ENCODE measurements at regions of chr15 and their contacts with region 1.

Region 1: DNA sequence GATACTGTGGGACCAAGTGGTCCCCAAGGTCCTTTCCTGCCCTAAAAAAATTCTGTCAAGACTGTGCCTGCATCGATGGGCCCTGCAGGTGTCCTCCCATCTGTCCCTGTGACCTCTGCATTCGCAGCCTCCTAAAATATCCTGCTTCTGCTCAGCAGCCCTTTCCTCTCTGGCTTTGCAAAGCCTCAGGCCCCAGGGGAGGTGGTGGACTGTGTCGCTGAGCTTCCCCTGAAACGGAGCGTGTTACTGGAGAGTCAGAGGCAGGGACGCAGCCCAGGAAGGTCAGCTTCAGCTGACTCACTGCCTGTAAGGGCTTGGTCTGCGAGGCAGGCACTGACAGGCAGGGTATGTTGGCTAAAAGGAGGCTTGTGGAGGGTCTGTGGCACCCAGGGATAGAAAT is 110.0 kb downstream of the RAB11A start:
- DNase-seq: no peak
- H3K4me3 ChIP-seq: no peak overlapping the region
- H3K4me3 Mint-ChIP-seq: no peak overlapping the region
- H3K27ac ChIP-seq: no peak overlapping the region
- H3K27ac Mint-ChIP-seq: no peak overlapping the region
- H3K4me1 ChIP-seq: no peaks in the 10 kb centered on the region
- H3K4me1 Mint-ChIP-seq: peaks cover 5% of the 10 kb centered on the region
- H3K27me3 ChIP-seq: peaks cover 24 to 32% of the 10 kb centered on the region in 2 donors
- H3K27me3 Mint-ChIP-seq: peaks cover 41 to 48% (median 43%) of the 10 kb centered on the region in 3 donors
- CTCF ChIP-seq: no peak

Region 2: GRCh38 chr15:65630760-65631159 is 348.6 kb before region 1 on chr15:
- intact Hi-C with region 1: no loop called
- DNase-seq: no peak
- H3K4me3 ChIP-seq: no peak overlapping the region
- H3K4me3 Mint-ChIP-seq: no peak overlapping the region
- H3K27ac ChIP-seq: no peak overlapping the region
- H3K27ac Mint-ChIP-seq: no peak overlapping the region
- H3K4me1 ChIP-seq: no peaks in the 10 kb centered on the region
- H3K4me1 Mint-ChIP-seq: peaks cover 2% of the 10 kb centered on the region
- H3K27me3 ChIP-seq: no peaks in the 10 kb centered on the region
- H3K27me3 Mint-ChIP-seq: peaks cover 0 to 2% (median 0%) of the 10 kb centered on the region in 3 donors
- CTCF ChIP-seq: no peak

Region 3: DNA sequence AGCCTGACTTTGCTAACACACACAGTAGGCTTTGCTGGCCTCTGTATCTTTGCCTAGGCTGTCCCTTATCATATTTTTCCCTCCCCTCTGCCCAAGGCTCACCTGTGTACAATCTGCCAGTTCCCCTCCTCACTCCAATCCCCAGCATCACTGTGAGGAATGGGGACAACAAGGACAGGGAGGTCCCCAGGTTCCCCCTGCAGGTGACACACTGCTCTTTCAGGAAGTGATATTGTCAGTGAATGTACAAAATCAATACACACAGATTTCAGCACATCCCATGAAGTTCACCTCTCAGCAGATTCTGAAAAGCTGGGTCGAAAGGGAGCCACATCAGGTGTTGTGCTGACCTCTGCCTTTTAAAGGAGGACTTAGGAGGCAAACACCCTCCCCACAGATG is 67.4 kb after region 1 on chr15:
- intact Hi-C with region 1: loop called in 1 of 2 experiments (anchors 10 kb)
- DNase-seq: no peak
- H3K4me3 ChIP-seq: no peak overlapping the region
- H3K4me3 Mint-ChIP-seq: no peak overlapping the region
- H3K27ac ChIP-seq: no peak overlapping the region
- H3K27ac Mint-ChIP-seq: no peak overlapping the region
- H3K4me1 ChIP-seq: no peaks in the 10 kb centered on the region
- H3K4me1 Mint-ChIP-seq: no peaks in the 10 kb centered on the region
- H3K27me3 ChIP-seq: no peaks in the 10 kb centered on the region
- H3K27me3 Mint-ChIP-seq: peaks cover 7 to 10% (median 10%) of the 10 kb centered on the region in 3 donors
- CTCF ChIP-seq: no peak